ENCODE measurements at regions of chr16 and their contacts with region 1.

Region 1: DNA sequence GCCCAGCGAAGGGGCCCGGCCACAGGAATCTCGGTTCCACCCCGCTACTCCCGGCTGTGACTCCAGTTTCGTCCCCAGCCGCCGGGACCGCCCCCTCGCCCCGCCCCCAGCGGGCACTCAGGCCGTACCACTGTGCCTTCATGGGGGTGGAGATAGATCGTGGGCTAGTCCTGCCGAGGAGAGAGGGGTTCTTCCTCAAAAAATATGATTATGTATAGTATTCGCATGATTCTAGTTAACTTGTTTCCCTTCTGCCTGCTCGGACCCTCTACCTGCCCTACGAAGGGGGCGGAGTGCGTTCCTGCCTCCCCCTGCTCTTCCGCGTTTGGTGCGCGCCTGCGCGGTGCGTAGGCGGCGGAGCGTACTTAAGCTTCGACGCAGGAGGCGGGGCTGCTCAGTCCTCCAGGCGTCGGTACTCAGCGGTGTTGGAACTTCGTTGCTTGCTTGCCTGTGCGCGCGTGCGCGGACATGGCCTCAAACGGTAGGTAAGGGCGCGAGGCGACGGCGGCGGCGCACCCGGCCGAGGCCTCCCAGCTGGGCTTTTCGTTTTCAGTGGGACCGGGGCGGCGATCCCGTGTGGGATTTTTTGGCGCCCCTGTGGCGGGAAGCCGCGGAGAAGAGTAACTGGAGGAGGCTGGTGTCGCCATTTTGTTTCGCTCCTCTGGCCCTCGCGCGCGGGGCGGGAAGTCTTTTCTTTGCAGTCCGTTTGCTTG is at the start of gene FUS:
- DNase-seq: peak; percentile 83 to 87
- ATAC-seq: peak; percentile 83
- H3K4me3 ChIP-seq: peak within 1 kb of the TSS; percentile 77 to 100 (median 86)
- H3K27ac ChIP-seq: peak within 1 kb of the TSS; percentile 94 to 100 (median 96)
- H3K4me1 ChIP-seq: peaks cover 37 to 42% of the 10 kb centered on the region in 2 donors
- H3K27me3 ChIP-seq: no peaks in the 10 kb centered on the region
- CTCF ChIP-seq: peak in 1 of 5 experiments; percentile 28
- POLR2A ChIP-seq: peak; percentile 98 to 99
- total RNA-seq, gene FUS: 20.6 to 45.9 (median 35.1) TPM

Region 2: GRCh38 chr16:31032736-31033708 is 146.9 kb before region 1 on chr16 and contains the start of gene STX4:
- in situ Hi-C with region 1: no loop called
- intact Hi-C with region 1: loop called (anchors 1 kb)
- DNase-seq: peak; percentile 97 to 98
- ATAC-seq: peak; percentile 91 to 93
- H3K4me3 ChIP-seq: peak within 1 kb of the TSS; percentile 82 to 99 (median 95)
- H3K27ac ChIP-seq: peak within 1 kb of the TSS; percentile 91 to 98 (median 92)
- H3K4me1 ChIP-seq: peaks cover 8 to 14% of the 10 kb centered on the region in 2 donors
- H3K27me3 ChIP-seq: no peaks in the 10 kb centered on the region
- CTCF ChIP-seq: peak in 3 of 5 experiments; percentile 2 to 54 (median 44)
- POLR2A ChIP-seq: peak; percentile 54 to 68
- total RNA-seq, gene STX4: 14.9 to 24.3 (median 21.4) TPM

Region 3: GRCh38 chr16:31142109-31143010 is 37.5 kb before region 1 on chr16:
- in situ Hi-C with region 1: no loop called
- intact Hi-C with region 1: loop called (anchors 1 kb)
- DNase-seq: peak; percentile 97 to 99
- ATAC-seq: peak; percentile 78 to 83
- H3K4me3 ChIP-seq: peak overlapping the region; percentile 42 to 75 (median 58)
- H3K27ac ChIP-seq: peak overlapping the region; percentile 79 to 88 (median 82)
- H3K4me1 ChIP-seq: peaks cover 19 to 22% of the 10 kb centered on the region in 2 donors
- H3K27me3 ChIP-seq: no peaks in the 10 kb centered on the region
- CTCF ChIP-seq: peak; percentile 98 to 100 (median 99)
- POLR2A ChIP-seq: peak; percentile 28 to 46

Region 4: GRCh38 chr16:31427441-31428278 is 247.8 kb after region 1 on chr16:
- in situ Hi-C with region 1: no loop called
- intact Hi-C with region 1: loop called (anchors 2 kb)
- DNase-seq: peak; percentile 62 to 84
- ATAC-seq: peak; percentile 12 to 28
- H3K4me3 ChIP-seq: peak overlapping the region; percentile 67 to 83 (median 79)
- H3K27ac ChIP-seq: peak overlapping the region; percentile 92 to 100 (median 98)
- H3K4me1 ChIP-seq: peaks cover 62 to 77% of the 10 kb centered on the region in 2 donors
- H3K27me3 ChIP-seq: no peaks in the 10 kb centered on the region
- CTCF ChIP-seq: no peak
- POLR2A ChIP-seq: peak in 1 of 2 donors; percentile 10

Region 5: GRCh38 chr16:31451681-31452351 is 271.9 kb after region 1 on chr16:
- in situ Hi-C with region 1: loop called in 1 of 4 experiments (anchors 10 kb)
- intact Hi-C with region 1: loop called (anchors 2 kb)
- DNase-seq: peak in 1 of 2 donors; percentile 84
- ATAC-seq: peak; percentile 12 to 33
- H3K4me3 ChIP-seq: no peak overlapping the region
- H3K27ac ChIP-seq: peak overlapping the region; percentile 90 to 99 (median 94)
- H3K4me1 ChIP-seq: peaks cover 52 to 53% of the 10 kb centered on the region in 2 donors
- H3K27me3 ChIP-seq: no peaks in the 10 kb centered on the region
- CTCF ChIP-seq: peak; percentile 47 to 71 (median 65)
- POLR2A ChIP-seq: no peak

Measured in gastrocnemius medialis (tissue), 4 donors.